Activated naive CD4-positive, alpha-beta T cell treated with anti-CD3 and anti-CD28 coated beads for 36 hours (primary cell): ENCODE measurements at regions of chr2 and their contacts with region 1.

Region 1: GRCh38 chr2:202911512-202912341 is at the starts of genes CARF and WDR12:
- DNase-seq: peak; percentile 95
- H3K4me3 Mint-ChIP-seq: peak within 1 kb of the TSS; percentile 87
- H3K27ac Mint-ChIP-seq: peak within 1 kb of the TSS; percentile 94
- H3K4me1 Mint-ChIP-seq: peaks cover 32% of the 10 kb centered on the region
- H3K27me3 Mint-ChIP-seq: no peaks in the 10 kb centered on the region
- total RNA-seq, gene CARF: 4.0 to 5.4 TPM
- total RNA-seq, gene WDR12: 83.0 to 98.3 TPM

Region 2: DNA sequence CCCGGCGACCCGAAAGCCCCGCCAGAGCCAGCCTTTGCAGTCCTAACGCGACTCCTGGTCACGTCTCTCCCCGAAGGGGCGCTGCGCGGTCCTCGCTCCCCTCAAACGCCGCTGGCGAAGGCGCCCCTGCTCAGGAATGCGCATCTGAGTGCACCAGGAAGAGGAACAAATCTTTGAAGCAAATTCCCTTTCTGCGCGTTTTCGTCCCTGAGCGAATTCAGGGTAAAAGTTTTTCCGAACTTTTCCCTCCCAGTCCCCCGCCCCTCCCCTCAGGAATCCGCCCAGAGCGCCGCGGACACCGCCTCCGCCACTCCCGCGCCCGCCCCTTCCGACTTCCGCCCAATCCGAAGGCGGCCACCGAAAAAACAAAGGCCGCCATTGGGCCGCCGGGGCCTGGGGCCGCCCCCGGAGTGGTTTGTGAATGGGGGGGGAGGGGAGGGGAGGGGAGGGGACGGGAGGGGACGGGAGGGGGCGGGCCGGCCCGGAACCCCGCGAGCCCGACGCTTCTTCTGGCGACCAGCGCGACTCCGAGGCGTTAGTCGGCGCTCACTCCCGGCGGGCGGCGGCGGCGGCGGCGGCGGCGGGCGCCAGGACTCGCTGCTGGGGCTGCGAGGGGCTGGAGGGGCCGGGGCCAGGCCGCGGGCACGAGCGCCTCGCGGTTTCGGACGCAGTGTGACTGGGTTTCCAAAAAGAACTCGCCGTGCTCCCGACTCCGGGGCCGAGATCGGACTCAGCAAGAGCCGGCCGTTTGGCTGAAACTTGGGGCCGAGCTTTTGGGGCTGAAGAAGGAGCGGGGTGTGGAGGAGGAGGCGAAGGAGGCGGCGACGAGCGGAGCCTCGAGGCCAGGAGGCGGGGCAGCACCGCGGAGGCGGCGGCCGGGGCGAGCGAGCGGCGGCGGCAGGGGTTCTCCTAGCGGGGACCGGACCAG is 878.1 kb before region 1 on chr2 and contains the start of gene FZD7:
- CTCF ChIA-PET with region 1: no interaction called
- intact Hi-C with region 1: loop called (anchors 10 kb)
- DNase-seq: peak; percentile 90
- H3K4me3 Mint-ChIP-seq: peak within 1 kb of the TSS; percentile 79
- H3K27ac Mint-ChIP-seq: no peak within 1 kb of the TSS
- H3K4me1 Mint-ChIP-seq: peaks cover 12% of the 10 kb centered on the region
- H3K27me3 Mint-ChIP-seq: peaks cover 18% of the 10 kb centered on the region
- total RNA-seq, gene FZD7: 0.17 to 0.43 TPM

Region 3: DNA sequence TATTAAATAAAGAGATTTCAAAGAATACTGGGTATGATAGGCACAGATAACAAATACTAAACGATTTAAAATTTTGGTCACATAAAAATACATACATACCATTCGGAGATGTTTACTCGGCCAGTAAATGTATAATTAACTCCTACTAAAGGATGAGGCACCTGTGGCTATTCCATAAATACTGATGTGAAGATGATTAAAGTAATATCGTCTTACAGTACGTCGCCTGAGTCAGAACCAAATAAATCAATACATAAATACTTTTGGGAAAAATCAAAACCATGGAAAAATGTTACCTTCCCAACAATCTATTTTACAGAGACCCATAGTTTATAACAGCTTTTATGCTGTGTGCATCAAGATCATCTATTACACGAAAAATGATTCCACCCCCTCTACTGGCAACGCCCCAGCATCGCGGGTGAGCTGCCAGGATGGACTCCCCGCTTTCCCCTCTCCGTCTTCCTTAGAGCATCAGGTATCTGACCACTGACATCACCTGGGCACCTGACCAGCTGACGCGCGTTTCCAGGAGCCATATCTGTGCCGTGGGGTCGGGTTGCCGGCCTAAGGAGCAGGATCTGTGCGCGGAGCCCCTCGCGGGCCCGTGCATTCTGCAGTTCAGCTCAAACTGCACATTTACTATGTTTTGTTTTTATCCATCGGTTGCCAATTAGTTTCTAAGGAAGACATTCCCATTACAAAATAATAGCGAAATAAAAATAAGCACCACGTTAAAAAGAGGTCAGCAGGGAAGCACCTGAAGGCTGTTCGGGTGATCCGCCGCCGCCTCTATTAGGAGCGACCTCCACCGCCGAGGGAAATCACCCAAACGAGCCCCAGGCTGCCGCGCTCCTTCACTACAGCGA is 41.1 kb before region 1 on chr2:
- CTCF ChIA-PET with region 1: interaction called, 4 read pairs
- intact Hi-C with region 1: loop called (anchors 1 kb)
- DNase-seq: peak; percentile 85
- H3K4me3 Mint-ChIP-seq: peak overlapping the region; percentile 88
- H3K27ac Mint-ChIP-seq: peak overlapping the region; percentile 72
- H3K4me1 Mint-ChIP-seq: peaks cover 7% of the 10 kb centered on the region
- H3K27me3 Mint-ChIP-seq: no peaks in the 10 kb centered on the region

Region 4: GRCh38 chr2:203327901-203328759 is 416.4 kb after region 1 on chr2 and contains the start of gene ABI2:
- CTCF ChIA-PET with region 1: no interaction called
- intact Hi-C with region 1: loop called (anchors 5 kb)
- DNase-seq: peak; percentile 65
- H3K4me3 Mint-ChIP-seq: peak within 1 kb of the TSS; percentile 84
- H3K27ac Mint-ChIP-seq: peak within 1 kb of the TSS; percentile 73
- H3K4me1 Mint-ChIP-seq: peaks cover 27% of the 10 kb centered on the region
- H3K27me3 Mint-ChIP-seq: no peaks in the 10 kb centered on the region
- total RNA-seq, gene ABI2: 34.0 to 40.9 TPM

Region 5: GRCh38 chr2:203484266-203485112 is 572.8 kb after region 1 on chr2:
- CTCF ChIA-PET with region 1: no interaction called
- intact Hi-C with region 1: no loop called
- DNase-seq: peak; percentile 68
- H3K4me3 Mint-ChIP-seq: no peak overlapping the region
- H3K27ac Mint-ChIP-seq: no peak overlapping the region
- H3K4me1 Mint-ChIP-seq: peaks cover 9% of the 10 kb centered on the region
- H3K27me3 Mint-ChIP-seq: no peaks in the 10 kb centered on the region